Dorsolateral prefrontal cortex (tissue), 120 donors: ENCODE measurements at regions of chr6 and their contacts with region 1.

Region 1: DNA sequence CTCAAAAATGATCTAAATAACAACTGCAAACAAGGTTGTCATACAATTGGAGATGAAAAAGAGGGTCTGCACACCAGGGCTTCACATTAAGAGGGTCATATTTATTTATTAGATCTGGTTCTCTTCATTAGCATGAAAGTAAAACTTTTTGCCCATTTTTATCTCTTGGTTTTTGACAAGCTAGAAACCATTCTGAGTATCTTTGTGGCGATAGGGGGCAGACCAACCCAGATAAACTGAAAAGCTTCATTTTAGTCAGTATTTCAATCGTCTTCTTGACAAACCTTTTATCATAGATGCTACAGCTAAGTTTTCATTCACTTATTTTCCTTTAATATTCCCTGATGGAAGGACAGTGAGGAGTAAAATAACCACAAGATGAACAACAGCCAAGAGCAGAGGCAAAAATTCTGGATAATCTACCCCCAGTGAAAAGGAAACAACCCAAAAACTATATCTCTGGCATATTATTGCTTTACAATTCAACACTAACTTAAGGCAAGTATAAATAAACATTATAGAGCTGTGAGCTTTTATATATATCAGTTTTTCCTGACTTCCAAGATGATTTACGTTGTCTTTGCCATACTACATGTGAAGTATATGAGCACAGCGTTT is 45.2 kb downstream of the THEMIS start:
- DNase-seq: peak in 3 of 10 donors; percentile 34 to 70 (median 41)
- H3K4me3 ChIP-seq: peak overlapping the region in 4 of 59 donors; percentile 2 to 42 (median 20)
- H3K27ac ChIP-seq: peak overlapping the region in 40 of 59 donors; percentile 5 to 78 (median 51)
- H3K27me3 ChIP-seq: no peaks in the 10 kb centered on the region
- CTCF ChIP-seq: peak; percentile 40 to 88 (median 68)

Region 2: DNA sequence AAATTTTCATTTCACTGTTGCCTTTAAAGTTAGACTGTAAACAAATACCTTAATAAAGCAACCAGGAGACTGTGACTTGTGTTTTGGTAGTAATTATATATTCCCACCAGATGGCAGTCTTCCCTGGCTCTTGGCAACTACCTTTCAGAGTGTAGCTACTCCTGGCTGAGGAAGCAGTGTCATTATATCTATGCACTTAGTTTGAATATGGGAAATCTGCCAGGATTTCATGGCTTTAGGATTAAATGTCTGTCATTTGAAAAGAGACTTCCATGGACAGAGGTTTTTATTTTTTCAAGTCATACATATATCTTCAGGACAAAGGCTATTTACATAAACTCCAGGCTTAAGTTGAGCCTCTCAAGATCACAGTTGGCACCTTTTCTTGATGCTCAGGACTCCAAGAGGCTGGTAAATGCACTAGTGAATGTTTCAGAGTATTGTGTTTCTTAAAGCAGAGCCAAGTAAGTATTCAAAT is 118.6 kb before region 1 on chr6:
- intact Hi-C with region 1: loop called in 1 of 2 experiments (anchors 5 kb)
- DNase-seq: peak in 3 of 10 donors; percentile 22 to 39 (median 27)
- H3K4me3 ChIP-seq: no peak overlapping the region
- H3K27ac ChIP-seq: peak overlapping the region in 1 of 59 donors; percentile 34
- H3K27me3 ChIP-seq: no peaks in the 10 kb centered on the region
- CTCF ChIP-seq: peak; percentile 52 to 91 (median 77)

Region 3: GRCh38 chr6:127980996-127981395 is 125.3 kb after region 1 on chr6:
- intact Hi-C with region 1: loop called in 1 of 2 experiments (anchors 10 kb)
- DNase-seq: peak in 3 of 10 donors; percentile 50 to 54 (median 50)
- H3K4me3 ChIP-seq: peak overlapping the region in 10 of 59 donors; percentile 3 to 42 (median 13)
- H3K27ac ChIP-seq: peak overlapping the region in 33 of 59 donors; percentile 2 to 71 (median 31)
- H3K27me3 ChIP-seq: no peaks in the 10 kb centered on the region
- CTCF ChIP-seq: peak in 15 of 56 donors; percentile 8 to 47 (median 20)

Region 4: GRCh38 chr6:128725271-128726233 is 869.9 kb after region 1 on chr6:
- intact Hi-C with region 1: loop called (anchors 10 kb)
- DNase-seq: peak in 1 of 10 donors; percentile 12
- H3K4me3 ChIP-seq: no peak overlapping the region
- H3K27ac ChIP-seq: no peak overlapping the region
- H3K27me3 ChIP-seq: no peaks in the 10 kb centered on the region
- CTCF ChIP-seq: peak; percentile 43 to 86 (median 75)